ENCODE measurements at regions of chr1 and their contacts with region 1.

Region 1: DNA sequence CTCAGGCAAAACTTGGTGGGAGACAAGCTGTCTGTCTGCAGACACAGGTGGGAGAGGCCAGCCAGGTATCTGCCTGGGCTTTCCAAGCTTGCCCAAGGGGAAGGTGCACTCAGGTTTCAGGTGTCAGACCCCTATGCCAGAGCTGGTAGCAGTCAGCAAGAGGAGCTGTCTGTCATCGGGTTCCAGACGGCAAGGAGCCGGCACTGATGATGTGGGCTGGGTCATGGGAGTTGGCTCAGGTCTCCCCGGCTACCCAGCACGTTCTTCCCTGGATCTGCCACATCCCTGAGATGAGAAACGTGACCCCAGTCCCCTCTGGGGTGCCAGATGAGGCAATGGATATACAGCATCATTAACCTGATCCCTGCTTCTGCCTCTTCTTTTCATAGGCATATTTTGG is 23.0 kb downstream of the TMCC2 start:
- DNase-seq: no peak
- H3K4me3 ChIP-seq: no peak overlapping the region
- H3K27ac ChIP-seq: no peak overlapping the region
- H3K4me1 ChIP-seq: peaks cover 0 to 6% (median 2%) of the 10 kb centered on the region in 4 experiments; a peak in 5 of 7 replicates
- H3K27me3 ChIP-seq: no peaks in the 10 kb centered on the region
- CTCF ChIP-seq: no peak
- EP300 ChIP-seq: no peak
- POLR2A ChIP-seq: no peak
- RAD21 ChIP-seq: no peak

Region 2: DNA sequence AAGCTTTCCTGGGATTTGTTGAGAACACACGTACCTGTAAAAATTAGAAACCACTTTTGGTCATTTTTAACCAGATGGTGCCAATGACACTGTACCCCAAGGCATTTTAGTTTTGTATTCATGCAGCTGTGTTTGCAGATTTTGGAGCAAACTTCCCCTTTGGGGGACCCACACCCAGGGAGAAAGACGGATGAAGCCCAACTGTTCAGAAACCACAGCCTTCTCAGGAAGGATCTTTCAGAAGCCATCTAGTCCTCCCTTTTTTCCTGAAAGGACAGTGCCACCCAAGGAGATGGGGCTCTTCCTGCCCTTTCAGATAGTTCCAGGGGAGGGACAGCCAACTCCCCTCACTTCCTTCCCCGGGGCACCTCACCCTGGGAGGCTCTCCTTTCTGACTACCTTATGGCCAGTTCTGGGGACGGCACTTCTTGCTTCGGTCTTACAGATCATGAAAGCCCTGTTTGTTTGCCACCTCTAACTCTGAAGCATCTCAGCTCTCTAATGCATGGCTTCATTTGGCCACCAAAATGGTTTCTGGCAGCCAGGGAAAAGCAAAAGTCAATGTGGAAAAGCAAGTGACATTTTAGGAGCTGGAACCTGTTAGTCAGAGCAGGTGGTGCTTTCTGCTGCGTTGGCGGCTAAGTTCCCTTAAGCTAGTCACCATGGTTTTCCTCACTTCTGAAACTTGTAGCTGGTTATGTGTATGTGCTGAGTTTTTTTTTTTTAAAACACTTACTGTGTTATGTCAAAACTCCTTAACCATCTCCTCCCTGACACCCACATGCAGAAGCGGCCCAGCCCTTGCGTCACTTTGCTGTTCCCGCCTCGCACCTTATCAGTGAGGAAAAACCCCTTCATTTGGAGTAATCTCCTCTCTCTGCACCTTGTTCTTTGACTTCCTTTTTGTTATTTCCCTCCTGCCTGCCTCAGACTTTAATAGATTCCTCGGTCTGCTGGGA is 12.9 kb before region 1 on chr1:
- CTCF ChIA-PET with region 1: interaction called, 1,035 read pairs
- POLR2A ChIA-PET with region 1: interaction called, 11 read pairs
- DNase-seq: no peak
- H3K4me3 ChIP-seq: no peak overlapping the region
- H3K27ac ChIP-seq: no peak overlapping the region
- H3K4me1 ChIP-seq: no peaks in the 10 kb centered on the region
- H3K27me3 ChIP-seq: no peaks in the 10 kb centered on the region
- CTCF ChIP-seq: no peak
- EP300 ChIP-seq: no peak
- POLR2A ChIP-seq: no peak
- RAD21 ChIP-seq: no peak

Region 3: GRCh38 chr1:205391386-205391785 is 140.7 kb after region 1 on chr1:
- CTCF ChIA-PET with region 1: no interaction called
- POLR2A ChIA-PET with region 1: no interaction called
- DNase-seq: no peak
- H3K4me3 ChIP-seq: no peak overlapping the region
- H3K27ac ChIP-seq: no peak overlapping the region
- H3K4me1 ChIP-seq: no peaks in the 10 kb centered on the region
- H3K27me3 ChIP-seq: no peaks in the 10 kb centered on the region
- CTCF ChIP-seq: no peak
- EP300 ChIP-seq: no peak
- POLR2A ChIP-seq: no peak
- RAD21 ChIP-seq: no peak